Activated CD4-positive, alpha-beta T cell treated with anti-CD3 and anti-CD28 coated beads for 36 hours (primary cell): ENCODE measurements at regions of chr5 and their contacts with region 1.

Region 1: DNA sequence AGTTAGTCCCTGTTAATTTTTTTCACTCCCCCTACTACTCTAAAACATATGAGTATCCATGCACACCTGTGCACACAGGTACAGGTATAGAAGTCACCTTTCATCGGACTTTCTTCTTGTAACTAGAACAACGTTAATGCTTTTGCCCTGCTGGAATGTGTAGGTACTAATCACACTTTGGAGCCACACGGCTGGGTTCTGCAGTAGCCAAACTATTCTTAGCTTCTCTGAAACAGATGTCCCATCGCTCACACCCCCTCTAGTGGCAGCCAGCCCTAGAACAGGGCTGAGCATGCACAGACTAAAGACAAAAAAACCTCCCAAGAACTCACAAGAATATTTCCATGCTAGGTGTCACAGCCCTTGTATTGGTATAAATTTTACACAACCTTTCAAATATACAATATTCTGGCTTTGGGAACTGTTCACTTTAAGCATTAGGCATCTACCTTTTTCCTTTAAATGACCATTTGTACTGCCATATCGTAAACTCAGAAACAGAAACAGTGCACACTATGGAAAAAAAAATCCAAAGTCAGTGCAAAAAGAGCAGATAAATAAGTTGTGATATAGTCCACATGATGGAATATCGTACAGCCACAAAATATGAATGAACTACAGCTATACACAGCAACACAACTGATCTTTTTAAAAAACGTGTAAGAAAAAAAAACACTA is 64.0 kb downstream of the RETREG1 start:
- DNase-seq: peak; percentile 81
- ATAC-seq: peak; percentile 89
- H3K4me3 Mint-ChIP-seq: no peak overlapping the region
- H3K27ac Mint-ChIP-seq: peak overlapping the region; percentile 45
- H3K4me1 Mint-ChIP-seq: peaks cover 30% of the 10 kb centered on the region
- H3K27me3 Mint-ChIP-seq: no peaks in the 10 kb centered on the region

Region 2: GRCh38 chr5:16160706-16161105 is 392.1 kb before region 1 on chr5:
- CTCF ChIA-PET with region 1: interaction called, 4 read pairs
- POLR2A ChIA-PET with region 1: no interaction called
- intact Hi-C with region 1: loop called (anchors 2 to 5 kb)
- DNase-seq: peak; percentile 35
- ATAC-seq: peak; percentile 63
- H3K4me3 Mint-ChIP-seq: no peak overlapping the region
- H3K27ac Mint-ChIP-seq: no peak overlapping the region
- H3K4me1 Mint-ChIP-seq: no peaks in the 10 kb centered on the region
- H3K27me3 Mint-ChIP-seq: no peaks in the 10 kb centered on the region

Region 3: DNA sequence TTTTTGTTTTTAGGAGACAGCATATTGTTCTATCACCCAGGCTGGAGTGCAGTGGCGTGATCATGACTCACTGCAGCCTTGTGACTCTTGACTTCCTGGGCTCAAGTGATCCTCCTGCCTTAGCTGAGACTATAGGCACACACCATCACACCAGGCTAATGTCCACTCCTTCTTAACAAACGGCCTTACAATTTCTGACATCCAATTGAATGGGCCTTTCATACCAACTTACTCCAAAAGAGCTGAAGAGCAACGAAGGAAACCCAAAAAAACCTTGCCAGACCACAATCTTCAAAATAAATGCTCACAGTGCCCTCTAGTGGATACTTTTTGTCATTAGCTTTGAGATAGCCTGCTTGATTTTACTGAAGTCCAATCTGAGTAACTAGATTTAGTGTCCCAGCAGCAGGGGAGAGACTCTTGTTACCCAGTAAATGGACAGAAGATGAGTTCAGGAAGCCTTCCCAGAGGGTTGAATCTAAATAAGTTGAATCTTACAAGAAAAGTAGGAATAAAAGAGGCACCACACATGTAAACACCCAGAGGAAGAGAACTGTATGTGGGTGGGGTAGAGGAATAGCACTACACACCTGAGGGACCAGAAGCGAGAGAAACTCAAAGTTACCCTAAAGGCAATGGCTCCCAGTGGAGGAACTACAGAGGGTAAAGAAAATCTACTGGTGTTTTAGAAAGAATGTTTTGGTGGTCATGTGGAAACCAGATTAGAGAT is 96.5 kb before region 1 on chr5:
- CTCF ChIA-PET with region 1: interaction called, 17 read pairs
- POLR2A ChIA-PET with region 1: no interaction called
- intact Hi-C with region 1: no loop called
- DNase-seq: peak; percentile 61
- ATAC-seq: peak; percentile 89
- H3K4me3 Mint-ChIP-seq: peak overlapping the region; percentile 34
- H3K27ac Mint-ChIP-seq: peak overlapping the region; percentile 79
- H3K4me1 Mint-ChIP-seq: peaks cover 52% of the 10 kb centered on the region
- H3K27me3 Mint-ChIP-seq: no peaks in the 10 kb centered on the region

Region 4: DNA sequence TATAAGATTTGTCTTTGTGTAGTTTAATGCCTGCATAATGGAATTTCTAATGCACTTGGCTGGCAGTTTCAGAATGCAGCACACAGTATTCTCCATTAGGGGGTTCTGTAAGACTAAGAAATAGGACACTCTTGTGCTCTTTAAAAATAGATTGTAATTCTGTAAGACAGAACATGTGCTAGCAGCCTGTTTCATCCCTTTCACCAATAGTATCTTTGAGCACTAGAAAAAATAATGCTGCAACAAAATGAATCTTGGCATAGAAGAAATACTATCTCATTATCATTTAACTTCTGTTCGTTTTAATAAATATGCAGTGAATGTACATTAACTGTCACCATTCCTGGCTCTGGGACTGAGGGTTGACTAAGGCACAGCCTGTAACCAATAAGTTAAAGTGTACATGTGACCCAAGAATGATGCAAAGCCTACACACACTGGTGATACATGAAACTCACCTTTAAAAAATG is 63.4 kb before region 1 on chr5:
- CTCF ChIA-PET with region 1: interaction called, 7 read pairs
- POLR2A ChIA-PET with region 1: no interaction called
- intact Hi-C with region 1: loop called (anchors 1 kb)
- DNase-seq: no peak
- ATAC-seq: peak; percentile 67
- H3K4me3 Mint-ChIP-seq: no peak overlapping the region
- H3K27ac Mint-ChIP-seq: peak overlapping the region; percentile 10
- H3K4me1 Mint-ChIP-seq: peaks cover 26% of the 10 kb centered on the region
- H3K27me3 Mint-ChIP-seq: no peaks in the 10 kb centered on the region

Region 5: DNA sequence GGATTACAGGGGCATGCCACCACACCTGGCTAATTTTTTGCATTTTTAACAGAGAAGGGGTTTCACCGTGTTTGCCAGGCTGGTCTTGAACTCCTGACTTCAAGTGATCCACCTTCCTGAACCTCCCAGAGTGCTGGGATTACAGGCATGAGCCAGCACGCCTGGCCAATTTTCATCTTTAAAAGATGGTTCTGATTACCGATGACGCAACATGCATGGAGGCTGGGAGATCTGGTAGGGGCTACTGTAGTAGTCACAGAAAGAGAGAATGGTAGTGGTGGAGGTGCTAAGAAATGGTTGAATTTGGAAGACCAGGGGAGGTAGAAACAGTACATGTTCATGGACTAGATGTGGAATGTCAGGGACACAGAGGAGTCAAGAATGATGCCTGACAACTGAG is 86.4 kb after region 1 on chr5:
- CTCF ChIA-PET with region 1: no interaction called
- POLR2A ChIA-PET with region 1: no interaction called
- intact Hi-C with region 1: no loop called
- DNase-seq: no peak
- ATAC-seq: no peak
- H3K4me3 Mint-ChIP-seq: no peak overlapping the region
- H3K27ac Mint-ChIP-seq: no peak overlapping the region
- H3K4me1 Mint-ChIP-seq: peaks cover 2% of the 10 kb centered on the region
- H3K27me3 Mint-ChIP-seq: no peaks in the 10 kb centered on the region

Region 6: DNA sequence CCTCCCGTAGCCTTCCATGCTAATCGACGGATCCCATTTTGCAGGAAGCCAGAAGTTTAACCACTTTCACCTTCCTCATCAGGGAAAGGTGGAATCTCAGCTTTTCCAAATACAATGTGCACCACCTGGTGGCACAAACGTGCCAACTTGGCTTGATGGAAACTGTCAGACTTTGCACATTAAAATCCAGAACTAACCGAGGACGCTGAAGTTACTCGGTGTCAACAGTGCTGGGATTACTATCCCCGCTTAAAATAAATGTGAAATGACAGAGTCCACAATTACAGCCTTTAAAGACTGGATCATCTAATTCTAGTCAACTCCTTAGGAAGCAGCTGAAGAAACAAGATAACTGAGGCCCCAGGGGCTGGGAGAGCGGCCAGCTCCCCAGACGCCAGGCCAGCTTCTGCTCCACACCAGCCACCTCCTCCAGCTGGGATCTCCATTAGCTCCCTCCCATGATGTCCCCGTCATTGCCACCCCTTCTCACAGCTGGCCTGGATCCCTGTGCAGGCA is 114.1 kb after region 1 on chr5:
- CTCF ChIA-PET with region 1: interaction called, 4 read pairs
- POLR2A ChIA-PET with region 1: no interaction called
- intact Hi-C with region 1: loop called in 1 of 2 experiments (anchors 5 kb)
- DNase-seq: peak; percentile 52
- ATAC-seq: peak; percentile 70
- H3K4me3 Mint-ChIP-seq: no peak overlapping the region
- H3K27ac Mint-ChIP-seq: no peak overlapping the region
- H3K4me1 Mint-ChIP-seq: peaks cover 3% of the 10 kb centered on the region
- H3K27me3 Mint-ChIP-seq: no peaks in the 10 kb centered on the region